ENCODE measurements at regions of chr9 and their contacts with region 1.

Region 1: DNA sequence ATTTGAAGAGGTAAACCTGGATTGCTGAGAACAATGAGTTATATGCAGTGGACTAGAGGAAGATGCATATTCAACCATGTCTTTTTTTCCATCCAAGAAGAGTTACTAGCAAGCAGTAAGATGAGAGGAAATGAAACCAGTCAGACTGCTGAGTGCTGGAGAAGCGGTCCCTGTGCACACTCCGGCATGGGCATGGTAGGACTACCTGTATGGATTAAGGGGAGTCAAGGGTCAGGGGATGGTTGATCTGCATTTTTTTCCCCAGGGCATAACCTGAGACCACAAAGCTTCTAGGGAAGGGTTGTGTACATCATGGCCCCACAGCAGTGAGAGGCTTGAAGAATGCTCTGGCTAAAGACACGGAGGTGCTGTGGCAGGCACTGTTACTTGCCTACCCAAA is 76.6 kb upstream of the ZNF169 start:
- DNase-seq: no peak
- H3K4me3 ChIP-seq: no peak overlapping the region
- H3K27ac ChIP-seq: no peak overlapping the region
- H3K4me1 ChIP-seq: no peaks in the 10 kb centered on the region
- H3K27me3 ChIP-seq: no peaks in the 10 kb centered on the region
- CTCF ChIP-seq: no peak

Region 2: GRCh38 chr9:93978551-93978950 is 204.0 kb before region 1 on chr9:
- CTCF ChIA-PET with region 1: interaction called, 14 read pairs
- POLR2A ChIA-PET with region 1: no interaction called
- intact Hi-C with region 1: no loop called
- DNase-seq: no peak
- H3K4me3 ChIP-seq: no peak overlapping the region
- H3K27ac ChIP-seq: no peak overlapping the region
- H3K4me1 ChIP-seq: no peaks in the 10 kb centered on the region
- H3K27me3 ChIP-seq: peaks cover 6% of the 10 kb centered on the region
- CTCF ChIP-seq: no peak

Region 3: GRCh38 chr9:94157050-94157764 is 25.3 kb before region 1 on chr9:
- CTCF ChIA-PET with region 1: no interaction called
- POLR2A ChIA-PET with region 1: interaction called, 11 read pairs
- intact Hi-C with region 1: no loop called
- DNase-seq: peak in 1 of 2 experiments; percentile 79
- H3K4me3 ChIP-seq: no peak overlapping the region
- H3K27ac ChIP-seq: no peak overlapping the region
- H3K4me1 ChIP-seq: no peaks in the 10 kb centered on the region
- H3K27me3 ChIP-seq: 0 out of 2 replicates have a peak, but pooled peaks cover 4% of the 10 kb centered on the region
- CTCF ChIP-seq: no peak

Region 4: GRCh38 chr9:94222872-94223271 is 40.3 kb after region 1 on chr9:
- CTCF ChIA-PET with region 1: no interaction called
- POLR2A ChIA-PET with region 1: no interaction called
- intact Hi-C with region 1: no loop called
- DNase-seq: peak in 1 of 2 experiments; percentile 49
- H3K4me3 ChIP-seq: no peak overlapping the region
- H3K27ac ChIP-seq: no peak overlapping the region
- H3K4me1 ChIP-seq: no peaks in the 10 kb centered on the region; the same call in 1 of the 2 replicates
- H3K27me3 ChIP-seq: no peaks in the 10 kb centered on the region
- CTCF ChIP-seq: no peak

Measured in PC-9 (cell line).